MCF 10A (cell line): ENCODE measurements at regions of chr3 and their contacts with region 1.

Region 1: GRCh38 chr3:157532529-157533297 is 29.5 kb upstream of the VEPH1 start:
- DNase-seq: peak; percentile 89
- H3K4me3 Mint-ChIP-seq: no peak overlapping the region
- H3K27ac Mint-ChIP-seq: no peak overlapping the region
- H3K4me1 Mint-ChIP-seq: no peaks in the 10 kb centered on the region
- H3K27me3 Mint-ChIP-seq: no peaks in the 10 kb centered on the region
- CTCF ChIP-seq: peak; percentile 66

Region 2: DNA sequence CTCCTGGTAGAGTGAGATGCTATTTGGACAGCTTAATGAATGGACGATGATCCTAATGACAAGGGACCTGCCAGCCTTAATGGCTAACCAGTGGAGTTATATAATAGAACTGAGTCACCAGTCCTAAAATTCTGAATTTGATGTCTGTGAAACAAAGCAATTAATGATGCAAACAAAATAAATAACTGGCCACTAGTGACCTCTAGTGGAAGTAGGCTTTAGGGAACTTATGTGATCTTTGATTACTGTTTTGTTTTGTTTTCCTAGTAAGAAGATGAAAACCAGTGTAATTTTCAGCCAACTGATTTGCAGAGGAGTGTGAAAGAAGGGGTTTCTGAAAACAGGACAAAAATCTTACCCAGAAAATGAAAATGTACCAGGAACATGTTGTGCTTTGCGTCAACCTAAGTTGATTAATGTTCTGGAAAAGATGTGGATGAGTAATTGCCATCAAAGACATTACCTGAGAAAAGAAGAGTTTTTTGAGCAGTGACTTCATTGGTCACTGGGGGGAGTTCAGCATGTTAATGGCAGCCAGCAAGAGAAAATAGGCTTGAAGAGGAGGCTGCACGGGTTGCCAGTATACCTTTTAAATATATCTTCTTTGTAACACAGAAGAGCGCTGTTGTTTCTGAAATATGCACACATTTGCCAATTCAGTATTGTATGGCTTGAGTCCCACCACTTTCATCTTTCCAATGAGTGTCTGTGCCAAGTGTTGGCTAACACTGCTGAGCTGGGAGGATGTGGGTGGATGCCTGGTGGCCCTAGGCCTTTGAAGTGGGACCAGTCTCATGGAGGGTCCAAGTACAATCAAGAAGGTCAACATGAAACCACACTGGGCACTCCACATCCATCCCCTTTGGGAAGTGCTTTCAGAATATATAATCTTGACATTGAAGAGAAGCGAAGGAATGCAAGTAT is 38.8 kb before region 1 on chr3:
- CTCF ChIA-PET with region 1: interaction called, 10 read pairs
- POLR2A ChIA-PET with region 1: interaction called, 8 read pairs
- intact Hi-C with region 1: no loop called
- DNase-seq: peak; percentile 70
- H3K4me3 Mint-ChIP-seq: no peak overlapping the region
- H3K27ac Mint-ChIP-seq: no peak overlapping the region
- H3K4me1 Mint-ChIP-seq: peaks cover 13% of the 10 kb centered on the region
- H3K27me3 Mint-ChIP-seq: no peaks in the 10 kb centered on the region
- CTCF ChIP-seq: peak; percentile 59

Region 3: DNA sequence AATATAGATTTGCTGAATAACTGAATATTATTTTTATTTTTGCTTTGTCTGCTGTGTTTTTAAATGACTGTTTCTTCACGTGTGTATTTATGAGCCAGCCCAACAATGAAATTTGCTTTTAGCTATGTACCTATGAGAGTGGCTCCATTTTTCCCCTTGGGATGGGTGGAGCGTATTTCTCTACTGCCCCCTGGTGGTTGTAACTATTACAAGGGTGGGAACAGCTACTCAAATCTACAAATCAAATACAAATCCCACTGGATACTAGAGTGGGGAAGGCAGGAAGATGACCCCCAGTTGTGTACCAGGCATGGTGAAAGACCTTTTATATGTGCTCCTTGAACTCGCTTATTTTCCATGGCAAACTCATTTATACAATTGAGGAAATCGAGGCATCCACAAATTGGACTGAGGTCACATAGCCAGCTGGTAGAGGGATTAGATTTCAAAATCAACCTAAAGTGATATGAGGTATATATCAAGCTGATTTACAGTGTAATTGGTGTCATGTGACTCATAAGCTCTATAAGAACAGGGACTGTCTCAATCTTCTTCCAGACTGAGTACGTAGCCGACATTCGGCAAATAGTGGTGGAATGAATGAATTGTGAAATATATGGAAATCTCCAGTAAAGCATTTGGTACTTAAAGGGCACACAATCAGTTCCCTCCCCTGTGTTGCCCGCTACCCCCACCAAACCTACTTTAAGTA is 40.0 kb after region 1 on chr3:
- CTCF ChIA-PET with region 1: interaction called, 59 read pairs
- POLR2A ChIA-PET with region 1: no interaction called
- intact Hi-C with region 1: loop called (anchors 1 kb)
- DNase-seq: peak; percentile 72
- H3K4me3 Mint-ChIP-seq: no peak overlapping the region
- H3K27ac Mint-ChIP-seq: no peak overlapping the region
- H3K4me1 Mint-ChIP-seq: peaks cover 11% of the 10 kb centered on the region
- H3K27me3 Mint-ChIP-seq: no peaks in the 10 kb centered on the region
- CTCF ChIP-seq: peak; percentile 63

Region 4: GRCh38 chr3:158313338-158313927 is 780.7 kb after region 1 on chr3:
- CTCF ChIA-PET with region 1: interaction called, 4 read pairs
- POLR2A ChIA-PET with region 1: no interaction called
- intact Hi-C with region 1: loop called (anchors 5 kb)
- DNase-seq: peak; percentile 52
- H3K4me3 Mint-ChIP-seq: no peak overlapping the region
- H3K27ac Mint-ChIP-seq: peak overlapping the region; percentile 25
- H3K4me1 Mint-ChIP-seq: peaks cover 5% of the 10 kb centered on the region
- H3K27me3 Mint-ChIP-seq: no peaks in the 10 kb centered on the region
- CTCF ChIP-seq: peak; percentile 38

Region 5: GRCh38 chr3:158539414-158540014 is 1006.8 kb after region 1 on chr3:
- CTCF ChIA-PET with region 1: interaction called, 11 read pairs
- POLR2A ChIA-PET with region 1: no interaction called
- intact Hi-C with region 1: no loop called
- DNase-seq: peak; percentile 61
- H3K4me3 Mint-ChIP-seq: no peak overlapping the region
- H3K27ac Mint-ChIP-seq: no peak overlapping the region
- H3K4me1 Mint-ChIP-seq: no peaks in the 10 kb centered on the region
- H3K27me3 Mint-ChIP-seq: no peaks in the 10 kb centered on the region
- CTCF ChIP-seq: peak; percentile 51